ENCODE measurements at regions of chr9 and their contacts with region 1.

Region 1: DNA sequence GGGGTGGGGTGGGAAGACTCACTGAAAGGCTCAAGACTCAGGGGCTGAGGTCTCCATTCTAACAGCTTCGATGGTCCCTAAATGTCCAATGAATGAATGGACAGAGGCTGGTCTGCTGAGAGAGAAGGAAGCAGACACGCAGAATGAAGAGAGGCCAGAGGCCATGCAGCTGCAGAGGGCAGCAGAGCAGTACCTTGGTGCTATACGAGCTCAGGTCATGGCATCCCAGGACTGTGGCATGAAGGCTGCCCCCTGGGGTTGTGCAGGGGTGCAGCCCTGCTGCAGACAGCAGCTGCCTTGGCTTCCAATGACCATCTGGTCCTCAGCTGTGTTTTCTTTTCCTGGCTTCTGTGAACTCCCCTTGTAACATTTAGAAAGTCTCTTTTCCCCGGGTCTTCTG is 15.2 kb upstream of the CORO2A start:
- DNase-seq: no peak
- ATAC-seq: no peak
- H3K4me3 ChIP-seq: no peak overlapping the region
- H3K4me3 Mint-ChIP-seq: no peak overlapping the region
- H3K27ac ChIP-seq: no peak overlapping the region
- H3K27ac Mint-ChIP-seq: no peak overlapping the region
- H3K4me1 ChIP-seq: peaks cover 9% of the 10 kb centered on the region
- H3K4me1 Mint-ChIP-seq: no peaks in the 10 kb centered on the region
- H3K27me3 ChIP-seq: no peaks in the 10 kb centered on the region
- H3K27me3 Mint-ChIP-seq: no peaks in the 10 kb centered on the region
- CTCF ChIP-seq: no peak

Region 2: GRCh38 chr9:98263482-98264357 is 56.1 kb after region 1 on chr9:
- intact Hi-C with region 1: loop called (anchors 1 kb)
- DNase-seq: peak; percentile 67 to 90
- ATAC-seq: peak; percentile 93 to 100 (median 100)
- H3K4me3 ChIP-seq: no peak overlapping the region
- H3K4me3 Mint-ChIP-seq: no peak overlapping the region
- H3K27ac ChIP-seq: no peak overlapping the region
- H3K27ac Mint-ChIP-seq: no peak overlapping the region
- H3K4me1 ChIP-seq: no peaks in the 10 kb centered on the region
- H3K4me1 Mint-ChIP-seq: no peaks in the 10 kb centered on the region
- H3K27me3 ChIP-seq: no peaks in the 10 kb centered on the region
- H3K27me3 Mint-ChIP-seq: peaks cover under 1 to 12% of the 10 kb centered on the region in 2 donors
- CTCF ChIP-seq: peak; percentile 94

Measured in natural killer cell (primary cell).